ENCODE measurements at regions of chr11 and their contacts with region 1.

Region 1: GRCh38 chr11:61129639-61130523 is 27.6 kb downstream of the CD5 start:
- DNase-seq: peak; percentile 82
- ATAC-seq: peak; percentile 100
- H3K4me3 Mint-ChIP-seq: no peak overlapping the region
- H3K27ac Mint-ChIP-seq: peak overlapping the region; percentile 6
- H3K4me1 Mint-ChIP-seq: peaks cover 8% of the 10 kb centered on the region
- H3K27me3 Mint-ChIP-seq: no peaks in the 10 kb centered on the region
- CTCF ChIP-seq: peak; percentile 96

Region 2: GRCh38 chr11:61028272-61028761 is 101.6 kb before region 1 on chr11:
- CTCF ChIA-PET with region 1: interaction called, 4 read pairs
- POLR2A ChIA-PET with region 1: interaction called, 5 read pairs
- intact Hi-C with region 1: loop called (anchors 5 kb)
- DNase-seq: no peak
- ATAC-seq: peak; percentile 91
- H3K4me3 Mint-ChIP-seq: peak overlapping the region; percentile 54
- H3K27ac Mint-ChIP-seq: peak overlapping the region; percentile 86
- H3K4me1 Mint-ChIP-seq: peaks cover 49% of the 10 kb centered on the region
- H3K27me3 Mint-ChIP-seq: no peaks in the 10 kb centered on the region
- CTCF ChIP-seq: no peak

Region 3: DNA sequence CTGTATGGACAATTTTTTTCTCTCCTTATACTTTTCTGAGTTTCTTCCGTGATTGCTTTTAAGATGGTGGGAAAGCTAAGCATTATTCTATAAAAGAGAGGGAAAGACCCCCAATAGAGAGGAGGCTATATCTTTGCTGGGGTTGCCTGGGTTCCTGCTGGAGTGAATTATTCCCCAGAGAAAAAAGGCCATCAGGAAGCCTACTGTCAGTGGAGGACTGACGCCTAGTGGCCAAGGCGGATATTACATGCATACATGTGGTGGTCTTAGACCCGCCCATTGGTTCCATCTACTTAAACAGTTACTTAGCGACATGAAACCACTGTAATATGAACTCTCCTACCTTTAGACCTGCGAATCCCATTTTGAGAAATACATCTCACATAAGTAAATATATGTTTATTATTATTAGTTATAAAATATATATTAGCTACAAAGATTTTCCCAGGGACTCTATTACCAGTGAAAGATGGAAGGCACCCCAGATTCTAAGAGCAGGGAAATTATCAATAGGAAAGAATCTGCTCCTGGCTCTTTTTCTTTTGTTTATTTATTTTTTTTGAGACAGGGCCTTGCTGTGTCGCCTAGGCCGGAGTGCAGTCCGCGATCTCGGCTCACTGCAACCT is 57.7 kb after region 1 on chr11:
- CTCF ChIA-PET with region 1: interaction called, 17 read pairs
- POLR2A ChIA-PET with region 1: no interaction called
- intact Hi-C with region 1: loop called (anchors 1 kb)
- DNase-seq: peak; percentile 63
- ATAC-seq: peak; percentile 100
- H3K4me3 Mint-ChIP-seq: no peak overlapping the region
- H3K27ac Mint-ChIP-seq: no peak overlapping the region
- H3K4me1 Mint-ChIP-seq: peaks cover 4% of the 10 kb centered on the region
- H3K27me3 Mint-ChIP-seq: no peaks in the 10 kb centered on the region
- CTCF ChIP-seq: peak; percentile 98

Region 4: GRCh38 chr11:61347916-61348461 is 218.1 kb after region 1 on chr11:
- CTCF ChIA-PET with region 1: no interaction called
- POLR2A ChIA-PET with region 1: no interaction called
- intact Hi-C with region 1: no loop called
- DNase-seq: no peak
- ATAC-seq: no peak
- H3K4me3 Mint-ChIP-seq: no peak overlapping the region
- H3K27ac Mint-ChIP-seq: peak overlapping the region; percentile 77
- H3K4me1 Mint-ChIP-seq: peaks cover 33% of the 10 kb centered on the region
- H3K27me3 Mint-ChIP-seq: no peaks in the 10 kb centered on the region
- CTCF ChIP-seq: no peak

Region 5: GRCh38 chr11:61392981-61393595 is 263.2 kb after region 1 on chr11:
- CTCF ChIA-PET with region 1: no interaction called
- POLR2A ChIA-PET with region 1: no interaction called
- intact Hi-C with region 1: no loop called
- DNase-seq: no peak
- ATAC-seq: peak; percentile 42
- H3K4me3 Mint-ChIP-seq: peak overlapping the region; percentile 97
- H3K27ac Mint-ChIP-seq: peak overlapping the region; percentile 96
- H3K4me1 Mint-ChIP-seq: peaks cover 26% of the 10 kb centered on the region
- H3K27me3 Mint-ChIP-seq: no peaks in the 10 kb centered on the region
- CTCF ChIP-seq: no peak

Region 6: GRCh38 chr11:61509043-61510029 is 379.5 kb after region 1 on chr11:
- CTCF ChIA-PET with region 1: no interaction called
- POLR2A ChIA-PET with region 1: no interaction called
- intact Hi-C with region 1: no loop called
- DNase-seq: peak; percentile 46
- ATAC-seq: peak; percentile 88
- H3K4me3 Mint-ChIP-seq: peak overlapping the region; percentile 41
- H3K27ac Mint-ChIP-seq: no peak overlapping the region
- H3K4me1 Mint-ChIP-seq: peaks cover 10% of the 10 kb centered on the region
- H3K27me3 Mint-ChIP-seq: peaks cover 47% of the 10 kb centered on the region
- CTCF ChIP-seq: no peak

Measured in activated B cell treated with CpG ODN at 0.5 μM for 24 hours (primary cell).